H1 (cell line): ENCODE measurements at regions of chr19 and their contacts with region 1.

Region 1: DNA sequence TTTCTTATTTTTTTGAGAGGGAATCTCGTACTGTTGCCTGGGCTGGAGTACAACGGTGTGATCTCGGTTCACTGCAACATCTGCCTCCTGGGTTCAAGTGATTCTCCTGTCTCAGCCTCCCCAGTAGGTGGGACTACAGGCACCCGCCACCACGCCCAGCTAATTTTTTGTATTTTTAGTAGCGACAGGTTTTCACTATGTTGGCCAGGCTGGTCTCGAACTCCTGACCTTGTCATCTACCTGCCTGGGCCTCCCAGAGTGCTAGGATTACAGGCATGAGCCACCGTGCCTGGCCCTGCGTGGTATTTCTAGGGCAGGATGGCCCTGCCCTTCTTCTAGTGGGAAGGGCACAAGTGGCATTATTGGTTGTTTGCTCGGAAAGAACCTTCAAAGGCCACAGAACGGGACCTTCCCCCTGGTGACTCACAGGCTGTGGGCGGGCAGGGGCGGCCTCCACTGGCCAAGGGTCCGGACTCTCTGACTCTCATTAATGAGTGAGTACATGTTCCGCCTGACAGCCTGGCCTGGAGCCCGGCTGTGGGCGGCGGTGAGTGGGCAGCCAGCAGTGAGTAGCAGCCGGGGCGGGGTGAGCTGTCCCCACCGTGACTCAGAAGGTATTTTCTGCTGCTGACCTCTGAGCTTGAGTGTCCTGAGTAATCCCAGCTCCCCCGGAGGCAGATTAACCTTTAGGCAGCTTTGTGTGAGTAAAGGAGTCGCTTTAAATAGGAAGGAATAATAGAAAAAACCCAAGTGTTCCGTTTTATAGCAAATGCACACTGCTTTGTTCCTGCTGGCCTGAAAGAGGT is 5.1 kb downstream of the DOT1L start:
- DNase-seq: no peak
- H3K4me3 ChIP-seq: no peak overlapping the region
- H3K27ac ChIP-seq: no peak overlapping the region
- H3K4me1 ChIP-seq: peaks cover 3 to 24% (median 9%) of the 10 kb centered on the region in 4 experiments
- H3K27me3 ChIP-seq: no peaks in the 10 kb centered on the region
- CTCF ChIP-seq: no peak
- EP300 ChIP-seq: no peak
- POLR2A ChIP-seq: no peak
- RAD21 ChIP-seq: no peak

Region 2: GRCh38 chr19:2014731-2015607 is 153.9 kb before region 1 on chr19:
- CTCF ChIA-PET with region 1: no interaction called
- POLR2A ChIA-PET with region 1: no interaction called
- DNase-seq: no peak
- H3K4me3 ChIP-seq: peak overlapping the region; percentile 49 to 79 (median 62)
- H3K27ac ChIP-seq: no peak overlapping the region
- H3K4me1 ChIP-seq: peaks cover 0 to 15% (median 4%) of the 10 kb centered on the region in 4 experiments; a peak in 5 of 7 replicates
- H3K27me3 ChIP-seq: no peaks in the 10 kb centered on the region
- CTCF ChIP-seq: no peak
- EP300 ChIP-seq: no peak
- POLR2A ChIP-seq: no peak
- RAD21 ChIP-seq: no peak

Region 3: DNA sequence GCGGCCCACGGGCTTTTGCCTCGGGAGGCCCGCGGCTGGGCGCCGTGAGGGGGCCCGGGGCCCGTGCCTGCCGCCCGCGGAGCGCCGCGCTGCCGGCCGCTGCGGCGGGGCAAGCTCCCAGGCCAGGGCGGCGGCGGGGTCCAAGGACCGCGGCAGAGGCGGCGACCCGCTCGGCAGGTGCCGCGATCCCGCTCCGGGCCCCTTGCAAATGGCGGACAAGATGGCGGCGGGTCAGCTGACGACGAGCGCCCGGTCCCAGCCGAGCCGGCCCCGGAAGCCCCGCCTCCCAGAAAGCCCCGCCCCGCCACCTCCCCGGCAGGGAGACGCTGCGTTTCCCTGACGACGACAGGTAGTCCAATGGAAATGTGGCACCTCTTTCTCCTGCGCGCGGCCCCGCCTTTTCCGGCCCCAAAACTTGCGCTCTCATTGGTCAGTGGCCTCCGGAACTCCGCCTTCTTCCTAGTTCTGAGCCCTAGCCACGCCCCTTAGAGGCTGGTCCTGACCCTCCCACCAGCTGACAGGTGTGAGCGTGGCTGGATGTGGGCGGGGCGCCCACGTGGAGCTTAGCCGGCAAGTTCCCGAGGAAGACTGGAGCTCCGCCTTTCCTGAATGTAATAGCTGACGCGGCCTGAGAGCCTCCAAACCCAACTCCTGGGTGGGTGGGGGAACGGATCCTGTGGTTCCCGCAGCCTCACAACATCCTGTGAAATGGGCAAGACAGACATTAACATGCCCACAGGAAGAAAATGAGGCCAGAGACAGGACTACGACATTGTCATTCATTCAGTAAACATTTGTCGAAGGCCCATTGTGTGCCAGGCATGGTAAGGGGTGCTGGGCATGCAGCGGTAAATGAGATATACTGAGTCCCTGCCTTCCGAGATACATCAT is 17.2 kb before region 1 on chr19 and contains the start of gene AP3D1:
- CTCF ChIA-PET with region 1: interaction called, 22 read pairs
- POLR2A ChIA-PET with region 1: interaction called, 5 read pairs
- DNase-seq: peak; percentile 99 to 100
- H3K4me3 ChIP-seq: peak within 1 kb of the TSS; percentile 64 to 99 (median 92)
- H3K27ac ChIP-seq: peak within 1 kb of the TSS; percentile 36
- H3K4me1 ChIP-seq: peaks cover 7 to 14% (median 13%) of the 10 kb centered on the region in 4 experiments
- H3K27me3 ChIP-seq: no peaks in the 10 kb centered on the region
- CTCF ChIP-seq: no peak
- EP300 ChIP-seq: no peak
- POLR2A ChIP-seq: peak in 1 of 2 experiments; percentile 29; a peak in 1 of 3 replicates
- RAD21 ChIP-seq: no peak
- total RNA-seq, gene AP3D1: 174 and 184 TPM in 2 replicates

Region 4: GRCh38 chr19:2210206-2210605 is 41.4 kb after region 1 on chr19:
- CTCF ChIA-PET with region 1: no interaction called
- POLR2A ChIA-PET with region 1: no interaction called
- DNase-seq: no peak
- H3K4me3 ChIP-seq: no peak overlapping the region
- H3K27ac ChIP-seq: no peak overlapping the region
- H3K4me1 ChIP-seq: no peaks in the 10 kb centered on the region
- H3K27me3 ChIP-seq: no peaks in the 10 kb centered on the region
- CTCF ChIP-seq: no peak
- EP300 ChIP-seq: no peak
- POLR2A ChIP-seq: no peak
- RAD21 ChIP-seq: no peak